Naive thymus-derived CD4-positive, alpha-beta T cell (primary cell): ENCODE measurements at regions of chr6 and their contacts with region 1.

Region 1: GRCh38 chr6:107820338-107821261 is 3.5 kb downstream of the SCML4 start:
- DNase-seq: peak in 8 of 9 donors; percentile 13 to 62 (median 51)
- ATAC-seq: peak; percentile 9
- H3K4me3 ChIP-seq: peak overlapping the region; percentile 76
- H3K4me3 Mint-ChIP-seq: peak overlapping the region; percentile 85 to 98 (median 95)
- H3K27ac ChIP-seq: peak overlapping the region; percentile 95
- H3K27ac Mint-ChIP-seq: peak overlapping the region; percentile 96 to 100 (median 99)
- H3K4me1 ChIP-seq: peaks cover 57 to 59% of the 10 kb centered on the region in 2 donors
- H3K4me1 Mint-ChIP-seq: peaks cover 45 to 83% (median 81%) of the 10 kb centered on the region in 7 donors
- H3K27me3 ChIP-seq: no peaks in the 10 kb centered on the region
- H3K27me3 Mint-ChIP-seq: no peaks in the 10 kb centered on the region

Region 2: DNA sequence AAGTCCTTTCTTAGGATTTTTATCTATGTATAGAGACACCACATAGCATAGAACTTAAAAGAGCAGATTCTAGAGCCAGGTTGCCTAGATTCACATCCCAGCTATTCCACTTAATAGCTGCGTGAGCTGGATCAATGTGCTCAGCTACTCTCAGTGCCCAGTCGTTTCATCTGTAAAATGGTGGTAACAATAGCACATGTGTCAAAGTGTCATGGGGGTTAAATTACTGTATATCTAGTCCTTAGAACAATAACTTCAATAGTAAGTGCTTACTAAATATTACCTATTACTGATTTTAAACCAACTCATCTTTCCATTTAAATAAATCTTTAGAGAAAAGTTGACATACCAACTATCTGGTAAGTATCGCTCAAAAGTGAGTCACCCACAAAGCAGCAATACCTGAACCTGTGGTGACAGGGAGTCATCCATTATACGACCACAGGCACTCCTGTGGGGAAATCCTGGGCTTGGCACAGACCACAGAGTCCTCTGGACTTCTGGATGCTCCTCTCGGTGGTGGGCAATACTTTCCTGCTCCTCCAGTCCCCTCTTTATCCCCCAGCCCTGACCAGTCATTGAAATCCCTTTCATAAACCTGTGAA is 516.1 kb before region 1 on chr6:
- CTCF ChIA-PET with region 1: no interaction called
- POLR2A ChIA-PET with region 1: no interaction called
- intact Hi-C with region 1: no loop called
- DNase-seq: no peak
- ATAC-seq: no peak
- H3K4me3 ChIP-seq: no peak overlapping the region
- H3K4me3 Mint-ChIP-seq: no peak overlapping the region
- H3K27ac ChIP-seq: no peak overlapping the region
- H3K27ac Mint-ChIP-seq: no peak overlapping the region
- H3K4me1 ChIP-seq: no peaks in the 10 kb centered on the region
- H3K4me1 Mint-ChIP-seq: peaks cover 0 to 4% (median 0%) of the 10 kb centered on the region in 7 donors
- H3K27me3 ChIP-seq: no peaks in the 10 kb centered on the region
- H3K27me3 Mint-ChIP-seq: no peaks in the 10 kb centered on the region

Region 3: GRCh38 chr6:107674995-107675738 is 145.4 kb before region 1 on chr6:
- CTCF ChIA-PET with region 1: no interaction called
- POLR2A ChIA-PET with region 1: no interaction called
- intact Hi-C with region 1: loop called in 1 of 2 experiments (anchors 1 kb)
- DNase-seq: peak; percentile 77 to 90 (median 86)
- ATAC-seq: peak; percentile 97
- H3K4me3 ChIP-seq: peak overlapping the region; percentile 36
- H3K4me3 Mint-ChIP-seq: peak overlapping the region in 8 of 10 donors; percentile 49 to 83 (median 76)
- H3K27ac ChIP-seq: peak overlapping the region; percentile 71
- H3K27ac Mint-ChIP-seq: peak overlapping the region; percentile 74 to 96 (median 85)
- H3K4me1 ChIP-seq: peaks cover 0 to 10% of the 10 kb centered on the region in 2 donors
- H3K4me1 Mint-ChIP-seq: peaks cover 0 to 17% (median 9%) of the 10 kb centered on the region in 7 donors
- H3K27me3 ChIP-seq: no peaks in the 10 kb centered on the region
- H3K27me3 Mint-ChIP-seq: peaks cover 0 to 15% (median 0%) of the 10 kb centered on the region in 5 donors

Region 4: DNA sequence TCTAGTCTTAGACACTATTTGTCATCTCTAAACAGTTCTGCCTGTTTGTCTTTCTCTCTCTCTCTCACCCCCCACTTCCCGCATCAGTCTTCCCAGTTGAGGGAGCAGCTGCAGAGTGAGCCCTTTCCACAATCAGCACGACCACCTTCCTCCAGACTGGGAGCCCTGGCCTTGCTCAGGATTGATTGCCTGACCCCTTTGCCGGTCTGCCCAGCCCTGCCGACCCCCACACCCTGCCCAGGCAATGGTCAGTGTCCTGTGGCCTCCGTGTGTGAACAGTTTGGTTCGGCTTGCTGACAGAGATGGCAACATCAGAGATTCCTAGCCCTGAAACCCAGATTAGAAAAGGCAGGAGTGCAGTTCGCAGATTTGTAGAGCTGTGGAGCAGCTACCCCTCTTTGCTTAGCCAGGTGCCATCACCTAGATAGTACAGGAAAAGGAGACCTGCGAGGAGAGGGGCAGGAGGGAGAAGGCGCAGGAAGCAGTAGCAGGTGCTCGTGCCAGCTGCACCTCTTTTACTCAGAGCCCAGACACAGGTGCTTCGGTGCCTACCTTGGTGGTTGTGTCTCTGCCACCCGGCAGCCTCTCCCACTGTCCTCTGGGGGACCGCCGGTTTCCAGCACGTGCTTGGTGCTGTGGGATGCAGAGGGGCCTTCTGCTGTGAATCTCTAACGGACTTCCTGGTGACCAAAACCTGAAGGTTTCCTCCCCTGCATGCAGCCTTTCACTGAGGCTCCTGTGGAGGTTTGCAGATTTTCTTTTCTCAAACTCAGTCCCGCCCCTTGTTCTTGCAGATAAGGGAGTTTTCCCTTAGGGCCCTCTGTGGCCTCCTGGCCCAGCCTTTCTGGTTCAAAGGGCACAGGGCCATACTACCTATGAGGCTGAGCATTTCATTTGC is 88.9 kb before region 1 on chr6:
- CTCF ChIA-PET with region 1: interaction called, 52 read pairs
- POLR2A ChIA-PET with region 1: interaction called, 176 read pairs
- intact Hi-C with region 1: loop called (anchors 1 kb)
- DNase-seq: peak in 7 of 9 donors; percentile 45 to 64 (median 58)
- ATAC-seq: peak; percentile 53
- H3K4me3 ChIP-seq: peak overlapping the region; percentile 68
- H3K4me3 Mint-ChIP-seq: peak overlapping the region; percentile 85 to 99 (median 97)
- H3K27ac ChIP-seq: peak overlapping the region; percentile 77
- H3K27ac Mint-ChIP-seq: peak overlapping the region; percentile 77 to 98 (median 95)
- H3K4me1 ChIP-seq: peaks cover 55 to 65% of the 10 kb centered on the region in 2 donors
- H3K4me1 Mint-ChIP-seq: peaks cover 56 to 86% (median 76%) of the 10 kb centered on the region in 7 donors
- H3K27me3 ChIP-seq: no peaks in the 10 kb centered on the region
- H3K27me3 Mint-ChIP-seq: peaks cover 0 to 13% (median 0%) of the 10 kb centered on the region in 5 donors

Region 5: GRCh38 chr6:107800564-107801164 is 19.9 kb before region 1 on chr6:
- CTCF ChIA-PET with region 1: interaction called, 6 read pairs
- POLR2A ChIA-PET with region 1: interaction called, 40 read pairs
- intact Hi-C with region 1: loop called (anchors 1 kb)
- DNase-seq: peak in 4 of 9 donors; percentile 28 to 53 (median 42)
- ATAC-seq: peak; percentile 75
- H3K4me3 ChIP-seq: no peak overlapping the region
- H3K4me3 Mint-ChIP-seq: peak overlapping the region in 2 of 10 donors; percentile 33 to 43
- H3K27ac ChIP-seq: no peak overlapping the region
- H3K27ac Mint-ChIP-seq: peak overlapping the region in 8 of 9 donors; percentile 53 to 96 (median 90)
- H3K4me1 ChIP-seq: peaks cover 10 to 34% of the 10 kb centered on the region in 2 donors
- H3K4me1 Mint-ChIP-seq: peaks cover 17 to 87% (median 81%) of the 10 kb centered on the region in 7 donors
- H3K27me3 ChIP-seq: no peaks in the 10 kb centered on the region
- H3K27me3 Mint-ChIP-seq: peaks cover 0 to 9% (median 0%) of the 10 kb centered on the region in 5 donors

Region 6: DNA sequence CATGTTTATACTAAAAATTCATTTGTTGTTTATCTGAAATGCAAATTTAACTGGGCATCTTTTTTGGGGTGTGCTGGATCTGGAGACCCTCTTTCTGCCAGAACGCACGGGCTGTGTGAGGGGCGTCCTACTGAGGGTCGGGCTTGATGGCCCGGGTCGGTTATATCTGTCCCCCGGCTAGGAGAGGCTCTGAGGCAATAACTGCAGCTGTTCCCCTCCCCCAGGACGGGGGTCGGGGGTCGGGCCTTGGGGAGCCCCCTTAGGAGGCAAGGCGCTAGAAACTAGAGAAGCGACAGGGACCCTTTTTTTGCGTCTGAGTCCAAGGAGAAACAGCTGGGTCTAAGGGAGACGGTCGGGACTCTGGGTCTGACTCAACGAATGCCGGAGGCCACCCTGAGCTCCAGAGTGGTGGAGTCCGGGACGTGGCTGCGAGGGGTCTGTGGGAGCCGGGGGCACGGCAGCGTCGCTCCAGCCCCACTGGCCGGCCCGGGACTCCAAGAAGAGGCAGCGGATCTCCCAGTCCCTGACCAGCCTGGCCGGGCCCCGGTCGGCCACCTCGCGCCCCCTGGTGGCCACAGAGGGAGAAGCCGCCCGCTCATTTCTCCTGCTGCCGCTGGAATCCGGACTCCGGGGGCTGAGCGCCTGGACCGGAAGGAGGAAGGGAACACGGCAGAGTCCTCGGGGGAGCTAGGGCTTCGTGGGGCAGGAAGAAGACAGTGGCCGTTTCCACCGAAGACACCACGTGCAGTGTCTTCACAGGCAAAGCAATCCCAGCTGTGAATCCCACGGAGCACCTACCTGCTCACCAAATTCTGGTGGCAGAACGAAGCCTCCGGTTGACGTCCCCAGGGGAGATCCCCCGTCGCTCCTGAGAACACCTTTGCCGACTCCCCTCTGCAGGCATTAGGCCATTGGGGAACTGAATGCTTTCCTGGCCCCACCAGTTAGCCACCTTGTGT is 27.5 kb after region 1 on chr6:
- CTCF ChIA-PET with region 1: interaction called, 67 read pairs
- POLR2A ChIA-PET with region 1: interaction called, 89 read pairs
- intact Hi-C with region 1: loop called (anchors 1 kb)
- DNase-seq: peak; percentile 66 to 88 (median 77)
- ATAC-seq: peak; percentile 92
- H3K4me3 ChIP-seq: peak overlapping the region; percentile 76
- H3K4me3 Mint-ChIP-seq: peak overlapping the region; percentile 73 to 91 (median 86)
- H3K27ac ChIP-seq: peak overlapping the region; percentile 67
- H3K27ac Mint-ChIP-seq: peak overlapping the region; percentile 68 to 95 (median 85)
- H3K4me1 ChIP-seq: peaks cover 0 to 21% of the 10 kb centered on the region in 2 donors
- H3K4me1 Mint-ChIP-seq: peaks cover 10 to 49% (median 26%) of the 10 kb centered on the region in 7 donors
- H3K27me3 ChIP-seq: no peaks in the 10 kb centered on the region
- H3K27me3 Mint-ChIP-seq: peaks cover 0 to 7% (median 0%) of the 10 kb centered on the region in 5 donors

Region 7: GRCh38 chr6:108883172-108883571 is 1062.6 kb after region 1 on chr6:
- CTCF ChIA-PET with region 1: no interaction called
- POLR2A ChIA-PET with region 1: no interaction called
- intact Hi-C with region 1: loop called in 1 of 2 experiments (anchors 5 kb)
- DNase-seq: no peak
- ATAC-seq: no peak
- H3K4me3 ChIP-seq: no peak overlapping the region
- H3K4me3 Mint-ChIP-seq: peak overlapping the region in 1 of 10 donors; percentile 24
- H3K27ac ChIP-seq: no peak overlapping the region
- H3K27ac Mint-ChIP-seq: peak overlapping the region in 1 of 9 donors; percentile 67
- H3K4me1 ChIP-seq: no peaks in the 10 kb centered on the region
- H3K4me1 Mint-ChIP-seq: peaks cover 0 to 39% (median 5%) of the 10 kb centered on the region in 7 donors
- H3K27me3 ChIP-seq: no peaks in the 10 kb centered on the region
- H3K27me3 Mint-ChIP-seq: peaks cover 0 to 42% (median 0%) of the 10 kb centered on the region in 5 donors